Endothelial cell of umbilical vein (primary cell): ENCODE measurements at regions of chr10 and their contacts with region 1.

Region 1: GRCh38 chr10:15859906-15860691 is at the start of gene MINDY3:
- DNase-seq: peak; percentile 60
- H3K4me3 ChIP-seq: peak within 1 kb of the TSS; percentile 68 to 84 (median 76)
- H3K27ac ChIP-seq: peak within 1 kb of the TSS; percentile 30
- H3K4me1 ChIP-seq: peaks cover 21% of the 10 kb centered on the region
- H3K27me3 ChIP-seq: peaks cover 2 to 14% of the 10 kb centered on the region in 2 experiments
- CTCF ChIP-seq: no peak
- POLR2A ChIP-seq: peak; percentile 63
- total RNA-seq, gene MINDY3: 20.2 and 21.2 TPM in 2 replicates

Region 2: GRCh38 chr10:15842556-15843169 is 17.4 kb before region 1 on chr10:
- CTCF ChIA-PET with region 1: interaction called, 14 read pairs
- POLR2A ChIA-PET with region 1: no interaction called
- dilution Hi-C with region 1: no loop called
- intact Hi-C with region 1: no loop called
- DNase-seq: peak; percentile 29
- H3K4me3 ChIP-seq: no peak overlapping the region
- H3K27ac ChIP-seq: no peak overlapping the region
- H3K4me1 ChIP-seq: no peaks in the 10 kb centered on the region
- H3K27me3 ChIP-seq: no peaks in the 10 kb centered on the region
- CTCF ChIP-seq: no peak
- POLR2A ChIP-seq: no peak

Region 3: DNA sequence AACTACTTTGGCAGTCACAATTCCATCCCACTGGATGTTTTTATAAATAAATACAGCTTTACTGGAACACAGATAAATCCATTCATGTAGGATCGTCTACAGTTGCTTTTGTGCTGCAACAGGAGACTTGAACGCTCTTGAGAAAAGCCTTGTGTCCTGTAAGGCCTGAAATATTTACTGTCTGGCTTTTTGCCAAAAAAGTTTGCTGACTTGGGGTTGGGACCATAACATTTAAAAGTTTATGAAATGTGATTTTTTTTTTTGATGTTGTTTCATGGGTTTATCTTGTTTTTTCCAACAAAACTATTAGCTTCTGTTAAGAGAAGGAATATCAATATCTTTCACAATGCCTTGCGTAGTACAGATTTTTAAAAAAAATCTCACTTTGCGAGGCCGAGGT is 71.3 kb after region 1 on chr10:
- CTCF ChIA-PET with region 1: no interaction called
- POLR2A ChIA-PET with region 1: no interaction called
- dilution Hi-C with region 1: no loop called
- intact Hi-C with region 1: no loop called
- DNase-seq: no peak
- H3K4me3 ChIP-seq: no peak overlapping the region
- H3K27ac ChIP-seq: no peak overlapping the region
- H3K4me1 ChIP-seq: no peaks in the 10 kb centered on the region
- H3K27me3 ChIP-seq: no peaks in the 10 kb centered on the region
- CTCF ChIP-seq: no peak
- POLR2A ChIP-seq: no peak

Region 4: DNA sequence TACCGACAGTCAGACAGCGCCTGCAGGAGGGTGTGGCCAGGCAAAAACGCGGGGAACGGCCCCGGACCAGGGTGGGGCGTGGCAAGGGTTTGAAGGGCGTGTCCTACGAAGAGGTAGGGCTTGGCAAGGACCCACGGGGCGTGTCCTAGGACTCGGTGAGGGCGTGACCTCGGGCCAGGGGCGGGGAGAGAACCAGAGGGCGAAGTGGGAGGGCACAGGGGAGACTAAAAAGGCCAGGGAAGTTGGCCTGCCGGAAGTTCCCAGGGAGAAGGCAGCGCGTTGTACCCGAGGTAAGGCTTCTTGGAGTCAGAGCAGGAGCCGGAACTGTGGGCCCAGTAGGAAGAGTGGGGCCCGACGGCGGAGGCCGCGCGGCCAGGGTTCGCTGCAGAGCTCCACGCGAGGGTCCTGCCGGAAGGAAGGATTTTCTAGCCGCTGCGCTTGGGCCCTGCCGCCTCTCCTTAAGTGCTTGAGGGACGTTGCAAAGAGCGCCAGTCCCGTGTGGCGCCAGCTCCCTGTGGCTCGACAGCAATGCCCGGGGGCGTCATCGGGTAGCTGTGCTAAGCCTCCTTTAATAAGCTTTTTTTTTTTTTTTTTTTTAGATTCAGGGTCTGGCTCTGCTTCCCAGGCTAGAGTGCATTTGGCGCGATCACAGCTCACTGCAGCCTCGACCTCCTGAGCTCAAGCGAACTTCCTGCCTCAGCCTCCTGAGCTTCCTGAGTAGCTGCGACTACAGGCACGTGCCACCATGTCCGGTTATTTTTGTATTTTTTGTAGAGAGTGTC is 576.9 kb after region 1 on chr10 and contains the start of gene PTER:
- CTCF ChIA-PET with region 1: no interaction called
- POLR2A ChIA-PET with region 1: no interaction called
- dilution Hi-C with region 1: no loop called
- intact Hi-C with region 1: loop called (anchors 1 kb)
- DNase-seq: peak; percentile 76
- H3K4me3 ChIP-seq: peak within 1 kb of the TSS; percentile 10 to 54 (median 41)
- H3K27ac ChIP-seq: no peak within 1 kb of the TSS
- H3K4me1 ChIP-seq: peaks cover 3% of the 10 kb centered on the region
- H3K27me3 ChIP-seq: no peaks in the 10 kb centered on the region
- CTCF ChIP-seq: no peak
- POLR2A ChIP-seq: peak; percentile 48
- total RNA-seq, gene PTER: 3.6 and 4.6 TPM in 2 replicates